ENCODE measurements at regions of chr2 and their contacts with region 1.

Region 1: DNA sequence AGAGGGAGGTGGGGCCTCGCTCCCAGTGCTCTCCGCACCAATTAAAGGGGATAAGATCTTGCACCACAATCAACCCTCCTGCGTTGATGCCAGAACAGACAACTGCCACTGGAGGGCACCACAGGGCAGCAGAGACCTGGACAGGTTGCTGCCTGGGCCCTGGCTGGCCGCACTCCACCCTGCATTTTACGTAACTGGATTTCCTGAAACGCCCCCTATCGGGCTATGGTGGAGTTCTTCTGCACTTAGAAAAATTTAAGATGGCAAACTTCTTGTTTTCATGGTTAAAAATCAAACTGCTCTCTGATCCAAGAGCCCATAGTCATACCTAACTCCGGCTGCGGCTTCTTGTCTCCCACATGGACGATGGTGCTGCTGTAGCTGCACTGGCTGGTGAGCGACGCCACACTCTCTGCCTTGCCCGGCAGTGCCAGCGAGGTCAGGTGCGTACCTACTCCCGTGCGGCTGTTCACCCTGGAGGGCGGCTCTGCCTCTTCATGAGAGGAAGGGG is 16.8 kb upstream of the HES6 start:
- DNase-seq: peak; percentile 88 to 92 (median 89)
- ATAC-seq: peak; percentile 94
- H3K4me3 ChIP-seq: no peak overlapping the region
- H3K4me1 ChIP-seq: no peaks in the 10 kb centered on the region
- CTCF ChIP-seq: peak; percentile 71

Region 2: DNA sequence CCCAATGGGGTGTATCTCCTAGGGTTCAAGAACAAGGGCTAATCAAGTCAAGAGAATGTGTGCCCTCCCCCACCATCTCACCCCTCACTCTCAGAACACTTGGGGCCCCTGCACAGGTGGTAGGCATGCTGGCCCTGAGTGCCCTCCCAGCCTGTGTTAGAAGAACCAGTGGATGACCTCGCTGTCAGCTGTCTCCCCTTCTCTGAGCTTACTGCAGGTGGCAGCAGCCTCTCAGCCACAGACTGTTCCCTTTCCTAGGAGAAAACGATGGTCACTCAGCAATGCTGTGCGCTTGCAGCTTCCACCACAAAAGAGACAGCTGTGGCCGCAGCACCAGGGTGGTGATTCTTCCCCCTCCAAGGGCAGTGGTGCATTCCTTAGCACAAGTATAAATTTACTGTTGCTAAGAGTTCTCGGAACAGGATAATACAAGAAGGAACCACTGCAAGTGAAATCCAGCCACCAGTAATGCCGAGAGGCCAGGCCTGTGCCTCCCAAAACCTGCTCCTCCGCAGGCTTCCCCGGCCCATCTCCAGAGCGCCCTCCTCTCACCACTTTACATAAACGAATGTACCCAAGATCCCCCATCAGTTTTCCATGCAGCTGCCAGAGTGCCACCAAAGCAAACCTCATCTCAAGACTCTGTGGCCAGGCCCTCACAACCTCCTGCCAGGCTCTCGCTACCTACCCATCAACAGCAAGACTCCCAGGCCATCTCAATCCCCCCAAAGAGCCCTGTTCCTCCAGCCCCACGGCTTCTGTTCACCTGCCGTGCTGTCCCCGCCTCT is 398.2 kb before region 1 on chr2:
- intact Hi-C with region 1: loop called in 1 of 2 experiments (anchors 10 kb)
- DNase-seq: peak in 2 of 3 donors; percentile 69 to 74
- ATAC-seq: peak; percentile 79
- H3K4me3 ChIP-seq: no peak overlapping the region
- H3K4me1 ChIP-seq: peaks cover 32% of the 10 kb centered on the region
- CTCF ChIP-seq: peak; percentile 23

Region 3: GRCh38 chr2:238081150-238081549 is 175.5 kb before region 1 on chr2:
- intact Hi-C with region 1: no loop called
- DNase-seq: no peak
- ATAC-seq: no peak
- H3K4me3 ChIP-seq: no peak overlapping the region
- H3K4me1 ChIP-seq: no peaks in the 10 kb centered on the region
- CTCF ChIP-seq: no peak

Region 4: DNA sequence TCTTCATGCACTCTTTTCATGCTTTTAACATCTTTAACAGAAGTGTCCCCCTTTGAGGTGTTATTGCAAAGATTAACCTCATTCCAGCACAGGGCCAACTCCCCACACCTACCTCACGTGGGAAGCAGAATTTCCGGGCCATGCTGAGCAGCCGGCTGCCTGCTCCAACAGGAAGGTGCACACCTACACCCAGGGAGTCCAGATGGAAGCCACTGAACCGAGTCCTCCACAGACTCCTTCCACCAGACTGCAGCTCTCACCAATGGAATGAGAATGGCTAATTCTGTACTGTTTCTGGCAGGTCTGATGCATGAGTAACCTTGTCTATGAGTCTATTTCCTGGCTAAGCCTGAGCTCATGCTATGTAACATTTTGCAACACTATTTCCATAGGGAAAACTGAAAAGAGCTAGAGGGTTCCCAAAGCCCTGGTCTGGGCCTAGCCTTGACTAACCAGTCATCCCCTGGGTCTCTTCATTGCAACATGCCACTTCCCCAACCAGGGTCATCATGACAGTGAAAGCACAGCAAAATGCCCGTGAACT is 86.9 kb before region 1 on chr2:
- intact Hi-C with region 1: no loop called
- DNase-seq: no peak
- ATAC-seq: no peak
- H3K4me3 ChIP-seq: no peak overlapping the region
- H3K4me1 ChIP-seq: peaks cover 5% of the 10 kb centered on the region
- CTCF ChIP-seq: no peak

Region 5: DNA sequence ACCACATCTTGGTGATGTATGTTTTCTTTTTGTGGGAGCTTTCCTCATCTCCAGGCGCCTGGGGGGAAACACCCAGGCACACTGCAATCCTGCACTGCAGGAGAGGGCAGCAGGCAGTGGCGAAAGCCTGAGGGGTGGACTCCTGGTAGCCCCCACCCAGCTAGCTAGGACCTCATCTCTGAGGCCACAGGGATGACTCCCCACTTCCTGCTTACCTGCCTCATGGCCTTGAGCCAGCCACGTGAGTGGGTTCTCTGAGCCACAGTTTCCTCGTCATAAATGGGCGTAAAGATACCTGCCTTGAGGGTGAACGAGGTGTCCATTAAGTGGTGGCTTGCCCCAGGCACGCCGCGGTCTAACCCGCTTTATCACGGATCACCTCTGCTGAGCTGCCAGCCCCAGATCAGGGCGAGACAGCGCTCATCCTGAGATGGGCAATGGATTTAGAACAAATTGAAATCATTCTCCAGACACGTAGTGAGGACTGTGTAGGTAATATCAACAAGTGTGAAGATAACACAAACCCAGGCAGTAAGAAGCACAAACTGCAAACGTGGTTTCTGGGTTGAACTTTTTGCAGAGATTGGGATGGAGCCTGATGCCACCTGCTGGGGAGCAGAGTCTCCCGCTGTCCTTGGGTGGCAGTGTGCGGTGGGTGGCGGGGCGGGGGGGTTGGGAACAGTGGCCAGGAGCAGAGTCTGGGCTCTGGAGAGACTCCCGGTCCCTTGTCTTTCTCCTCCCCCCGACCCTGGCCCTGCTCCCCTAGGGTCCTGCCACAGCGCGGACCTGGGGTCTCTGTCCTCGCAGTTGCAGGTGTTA is 83.0 kb after region 1 on chr2:
- intact Hi-C with region 1: loop called in 1 of 2 experiments (anchors 10 kb)
- DNase-seq: peak in 2 of 3 donors; percentile 59 to 71
- ATAC-seq: peak; percentile 86
- H3K4me3 ChIP-seq: no peak overlapping the region
- H3K4me1 ChIP-seq: no peaks in the 10 kb centered on the region
- CTCF ChIP-seq: no peak

Measured in mucosa of descending colon (tissue), 3 donors.